Heart left ventricle (tissue), 16 donors: ENCODE measurements at regions of chr9 and their contacts with region 1.

Region 1: DNA sequence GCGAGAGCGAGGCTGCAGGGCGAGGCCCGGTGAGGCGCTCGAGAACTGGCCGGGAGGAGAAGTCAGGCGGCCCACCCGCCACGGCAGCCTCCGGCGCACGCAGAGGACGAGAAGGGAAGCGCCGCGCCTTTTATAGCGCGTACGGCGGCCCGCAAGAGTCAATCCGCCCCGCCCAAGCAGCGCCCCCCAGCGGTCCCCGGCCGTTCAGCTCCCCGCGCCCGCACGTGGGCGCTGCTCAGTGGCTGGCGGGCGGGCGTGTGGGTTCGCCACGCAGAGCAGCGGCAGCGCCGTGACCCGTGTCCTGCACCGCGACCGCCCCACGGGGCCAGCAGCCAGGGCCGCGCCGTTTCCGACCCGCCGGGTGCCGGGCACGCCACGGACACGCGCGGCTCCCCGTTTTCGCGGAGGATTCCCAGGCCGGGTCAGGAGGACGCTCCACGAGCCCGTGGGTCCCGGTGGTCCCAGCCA is 14.6 kb downstream of the LCN10 start:
- DNase-seq: peak; percentile 92 to 96 (median 93)
- ATAC-seq: peak; percentile 53 to 79 (median 74)
- H3K4me3 ChIP-seq: peak overlapping the region; percentile 68 to 96 (median 83)
- H3K27ac ChIP-seq: peak overlapping the region; percentile 37 to 89 (median 82)
- H3K4me1 ChIP-seq: peaks cover 13 to 59% (median 36%) of the 10 kb centered on the region in 12 donors
- H3K27me3 ChIP-seq: no peaks in the 10 kb centered on the region
- CTCF ChIP-seq: peak; percentile 84 to 98 (median 93)
- POLR2A ChIP-seq: peak; percentile 35 to 99

Region 2: GRCh38 chr9:136686794-136687711 is 41.1 kb before region 1 on chr9 and contains the start of gene AGPAT2:
- intact Hi-C with region 1: loop called in 3 of 10 experiments (anchors 5 kb)
- DNase-seq: peak; percentile 86 to 91 (median 87)
- ATAC-seq: peak; percentile 44 to 80 (median 69)
- H3K4me3 ChIP-seq: peak within 1 kb of the TSS; percentile 59 to 94 (median 86)
- H3K27ac ChIP-seq: peak within 1 kb of the TSS; percentile 57 to 95 (median 89)
- H3K4me1 ChIP-seq: peaks cover 12 to 95% (median 58%) of the 10 kb centered on the region in 12 donors
- H3K27me3 ChIP-seq: no peaks in the 10 kb centered on the region
- CTCF ChIP-seq: peak in 1 of 12 donors; percentile 15
- POLR2A ChIP-seq: peak in 1 of 2 donors; percentile 89
- total RNA-seq, gene AGPAT2: 52.4 to 90.7 (median 62.5) TPM

Region 3: GRCh38 chr9:136769710-136770191 is 41.6 kb after region 1 on chr9:
- intact Hi-C with region 1: no loop called
- DNase-seq: peak in 1 of 5 donors; percentile 22
- ATAC-seq: peak in 2 of 4 donors; percentile 48 to 52
- H3K4me3 ChIP-seq: no peak overlapping the region
- H3K27ac ChIP-seq: no peak overlapping the region
- H3K4me1 ChIP-seq: peaks cover 0 to 4% (median 0%) of the 10 kb centered on the region in 12 donors
- H3K27me3 ChIP-seq: peaks cover 0 to 7% (median 0%) of the 10 kb centered on the region in 9 donors
- CTCF ChIP-seq: peak; percentile 23 to 50 (median 36)
- POLR2A ChIP-seq: no peak

Region 4: DNA sequence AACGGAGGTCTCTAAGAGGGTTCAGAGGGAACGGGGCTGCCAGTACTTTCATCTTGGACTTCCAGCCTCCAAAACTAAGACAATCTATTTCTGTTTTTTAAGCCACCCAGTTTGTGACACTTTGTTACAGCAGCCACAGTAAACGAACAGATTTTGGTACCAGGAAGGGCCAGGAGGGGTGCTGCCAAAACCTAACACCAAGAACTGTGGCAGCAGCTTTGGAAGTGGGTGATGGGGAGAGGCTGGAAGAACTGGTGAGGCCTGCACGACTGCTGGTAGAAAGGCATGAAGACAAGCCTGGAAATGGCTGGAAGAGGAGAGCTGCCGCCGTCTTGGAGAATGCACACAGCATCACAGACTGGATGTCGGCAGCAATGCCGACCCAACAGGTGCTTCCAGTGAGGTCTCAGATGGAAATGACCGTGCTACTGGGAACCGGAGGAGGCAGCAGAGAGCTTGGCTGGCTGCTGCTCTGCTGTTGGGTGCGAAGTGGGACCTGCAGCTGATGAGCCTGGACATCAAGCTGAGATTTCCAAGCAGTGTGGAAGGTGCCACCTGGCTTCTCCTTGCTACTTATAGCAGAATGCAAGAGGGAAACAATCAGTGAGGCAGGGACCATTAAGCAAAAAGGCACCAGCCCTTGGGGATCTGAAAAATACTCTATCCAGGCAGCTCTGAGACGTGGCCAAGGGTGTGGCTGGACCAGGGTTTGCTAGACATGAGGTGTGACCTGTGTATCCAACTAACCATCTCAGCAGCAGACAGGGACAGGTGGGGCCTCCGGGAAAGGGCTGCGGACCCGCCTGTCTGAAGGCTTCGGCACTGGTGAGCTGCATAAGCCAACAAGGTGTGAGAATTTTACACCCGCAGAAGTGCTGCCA is 448.4 kb after region 1 on chr9:
- intact Hi-C with region 1: no loop called
- DNase-seq: no peak
- ATAC-seq: peak in 2 of 4 donors; percentile 37 to 44
- H3K4me3 ChIP-seq: no peak overlapping the region
- H3K27ac ChIP-seq: no peak overlapping the region
- H3K4me1 ChIP-seq: peaks cover 0 to 4% (median 0%) of the 10 kb centered on the region in 12 donors
- H3K27me3 ChIP-seq: peaks cover 0 to 16% (median 0%) of the 10 kb centered on the region in 9 donors
- CTCF ChIP-seq: peak in 8 of 12 donors; percentile 22 to 52 (median 42)
- POLR2A ChIP-seq: no peak